ENCODE measurements at regions of chr16 and their contacts with region 1.

Region 1: GRCh38 chr16:30429678-30430427 is at the start of gene DCTPP1:
- DNase-seq: peak; percentile 89 to 100 (median 95)
- ATAC-seq: peak; percentile 96
- H3K4me3 ChIP-seq: peak within 1 kb of the TSS; percentile 62 to 71
- H3K4me3 Mint-ChIP-seq: no peak within 1 kb of the TSS
- H3K27ac ChIP-seq: peak within 1 kb of the TSS; percentile 60 to 72
- H3K27ac Mint-ChIP-seq: no peak within 1 kb of the TSS
- H3K4me1 ChIP-seq: peaks cover 18% of the 10 kb centered on the region
- H3K4me1 Mint-ChIP-seq: peaks cover 19% of the 10 kb centered on the region
- H3K27me3 ChIP-seq: no peaks in the 10 kb centered on the region
- H3K27me3 Mint-ChIP-seq: no peaks in the 10 kb centered on the region
- CTCF ChIP-seq: peak; percentile 63
- total RNA-seq, gene DCTPP1: 4.0 to 5.5 TPM

Region 2: DNA sequence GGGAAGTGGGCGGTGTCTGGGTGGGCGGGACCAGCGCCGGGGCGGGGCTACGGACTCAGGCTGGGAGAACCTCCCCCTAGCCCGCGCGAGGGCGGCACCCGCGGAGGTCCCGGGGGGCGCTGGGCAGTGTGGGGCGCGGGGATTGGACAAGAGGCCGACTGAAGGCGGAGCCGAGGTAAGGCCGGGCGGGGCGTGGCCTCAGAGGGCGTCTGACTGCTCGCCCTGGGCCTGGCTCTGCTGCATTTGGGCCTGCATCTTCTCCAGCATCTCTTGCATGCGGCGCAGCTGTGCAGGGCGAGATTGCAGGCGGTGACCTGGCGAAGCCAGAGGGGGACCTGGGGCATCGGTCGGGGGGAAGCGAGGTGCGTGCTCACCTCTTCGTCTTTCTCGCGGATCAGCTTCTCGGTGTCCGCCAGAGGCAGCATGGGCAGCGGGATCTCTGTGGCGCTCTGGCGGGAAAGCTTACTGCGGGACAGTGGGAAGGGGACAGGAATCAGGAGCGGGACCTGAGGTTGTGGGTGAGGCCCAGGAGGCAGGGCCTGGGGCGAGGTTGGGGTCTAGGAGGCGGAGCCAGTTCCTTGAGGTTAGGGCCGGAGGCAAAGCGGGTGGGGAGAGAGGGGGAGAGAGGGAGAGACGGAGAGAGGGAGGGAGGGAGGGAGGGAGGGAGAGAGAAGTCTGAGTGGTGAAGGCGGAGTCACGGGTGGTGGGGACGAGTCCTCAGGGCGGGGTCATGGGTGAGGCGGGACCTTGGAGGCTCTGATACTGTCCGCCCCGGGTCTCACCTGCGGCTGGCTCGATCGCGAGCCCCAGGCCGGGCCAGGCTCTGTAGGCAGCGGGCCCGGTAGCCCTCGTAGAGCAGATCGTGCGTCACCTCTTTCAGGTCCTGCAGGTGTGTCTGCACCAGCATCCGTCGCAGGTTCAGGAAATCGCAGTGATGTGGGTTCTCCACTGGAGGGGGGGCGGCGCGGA is 51.3 kb before region 1 on chr16:
- CTCF ChIA-PET with region 1: interaction called, 3 read pairs
- POLR2A ChIA-PET with region 1: interaction called, 14 read pairs
- intact Hi-C with region 1: no loop called
- DNase-seq: peak; percentile 99 to 100 (median 100)
- ATAC-seq: peak; percentile 78
- H3K4me3 ChIP-seq: peak overlapping the region; percentile 82 to 94
- H3K4me3 Mint-ChIP-seq: peak overlapping the region; percentile 98
- H3K27ac ChIP-seq: peak overlapping the region; percentile 99 to 100
- H3K27ac Mint-ChIP-seq: peak overlapping the region; percentile 100
- H3K4me1 ChIP-seq: peaks cover 58% of the 10 kb centered on the region
- H3K4me1 Mint-ChIP-seq: peaks cover 60% of the 10 kb centered on the region
- H3K27me3 ChIP-seq: no peaks in the 10 kb centered on the region
- H3K27me3 Mint-ChIP-seq: no peaks in the 10 kb centered on the region
- CTCF ChIP-seq: no peak

Region 3: DNA sequence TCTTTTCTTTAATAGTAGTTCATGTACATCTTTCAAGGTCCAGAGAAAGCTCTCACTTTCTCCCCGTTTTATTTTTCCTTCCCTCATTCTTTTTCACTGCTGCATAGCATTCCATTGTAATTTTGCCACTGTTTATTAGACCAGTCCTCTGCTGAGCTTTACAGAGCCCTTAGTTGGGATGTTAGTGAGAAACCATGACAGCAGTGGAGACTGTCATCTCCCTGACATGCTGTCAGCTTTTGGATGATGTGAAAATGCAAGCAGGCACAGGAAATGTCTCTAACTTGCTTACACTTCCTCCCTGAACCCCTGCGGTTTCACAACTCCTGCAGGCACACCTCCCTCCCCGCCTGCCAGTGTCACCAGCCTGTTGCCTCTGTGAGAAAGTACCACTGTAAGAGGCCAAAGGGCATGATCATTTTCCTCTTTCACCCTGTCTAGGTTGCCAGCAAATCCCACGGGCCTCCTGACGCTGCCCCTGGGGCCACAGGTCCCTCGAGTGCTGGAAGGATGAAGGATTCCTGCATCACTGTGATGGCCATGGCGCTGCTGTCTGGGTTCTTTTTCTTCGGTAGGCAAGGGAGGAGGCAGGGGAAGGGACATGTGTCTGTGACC is 42.6 kb after region 1 on chr16 and contains the start of gene ITGAL:
- CTCF ChIA-PET with region 1: interaction called, 18 read pairs
- POLR2A ChIA-PET with region 1: interaction called, 11 read pairs
- intact Hi-C with region 1: loop called (anchors 1 kb)
- DNase-seq: peak; percentile 67 to 96 (median 85)
- ATAC-seq: peak; percentile 81
- H3K4me3 ChIP-seq: peak within 1 kb of the TSS; percentile 70 to 89
- H3K4me3 Mint-ChIP-seq: peak within 1 kb of the TSS; percentile 95
- H3K27ac ChIP-seq: peak within 1 kb of the TSS; percentile 80 to 83
- H3K27ac Mint-ChIP-seq: peak within 1 kb of the TSS; percentile 93
- H3K4me1 ChIP-seq: peaks cover 71% of the 10 kb centered on the region
- H3K4me1 Mint-ChIP-seq: peaks cover 68% of the 10 kb centered on the region
- H3K27me3 ChIP-seq: no peaks in the 10 kb centered on the region
- H3K27me3 Mint-ChIP-seq: no peaks in the 10 kb centered on the region
- CTCF ChIP-seq: no peak
- total RNA-seq, gene ITGAL: 187 to 218 TPM

Region 4: GRCh38 chr16:30557957-30558788 is 128.3 kb after region 1 on chr16 and contains the start of gene ZNF764:
- CTCF ChIA-PET with region 1: interaction called, 14 read pairs
- POLR2A ChIA-PET with region 1: interaction called, 6 read pairs
- intact Hi-C with region 1: loop called in 1 of 2 experiments (anchors 1 kb)
- DNase-seq: peak; percentile 88 to 98 (median 96)
- ATAC-seq: peak; percentile 90
- H3K4me3 ChIP-seq: peak within 1 kb of the TSS; percentile 68 to 84
- H3K4me3 Mint-ChIP-seq: peak within 1 kb of the TSS; percentile 84
- H3K27ac ChIP-seq: peak within 1 kb of the TSS; percentile 80 to 88
- H3K27ac Mint-ChIP-seq: peak within 1 kb of the TSS; percentile 93
- H3K4me1 ChIP-seq: peaks cover 28% of the 10 kb centered on the region
- H3K4me1 Mint-ChIP-seq: peaks cover 35% of the 10 kb centered on the region
- H3K27me3 ChIP-seq: no peaks in the 10 kb centered on the region
- H3K27me3 Mint-ChIP-seq: no peaks in the 10 kb centered on the region
- CTCF ChIP-seq: no peak
- total RNA-seq, gene ZNF764: 15.0 to 15.6 TPM

Region 5: DNA sequence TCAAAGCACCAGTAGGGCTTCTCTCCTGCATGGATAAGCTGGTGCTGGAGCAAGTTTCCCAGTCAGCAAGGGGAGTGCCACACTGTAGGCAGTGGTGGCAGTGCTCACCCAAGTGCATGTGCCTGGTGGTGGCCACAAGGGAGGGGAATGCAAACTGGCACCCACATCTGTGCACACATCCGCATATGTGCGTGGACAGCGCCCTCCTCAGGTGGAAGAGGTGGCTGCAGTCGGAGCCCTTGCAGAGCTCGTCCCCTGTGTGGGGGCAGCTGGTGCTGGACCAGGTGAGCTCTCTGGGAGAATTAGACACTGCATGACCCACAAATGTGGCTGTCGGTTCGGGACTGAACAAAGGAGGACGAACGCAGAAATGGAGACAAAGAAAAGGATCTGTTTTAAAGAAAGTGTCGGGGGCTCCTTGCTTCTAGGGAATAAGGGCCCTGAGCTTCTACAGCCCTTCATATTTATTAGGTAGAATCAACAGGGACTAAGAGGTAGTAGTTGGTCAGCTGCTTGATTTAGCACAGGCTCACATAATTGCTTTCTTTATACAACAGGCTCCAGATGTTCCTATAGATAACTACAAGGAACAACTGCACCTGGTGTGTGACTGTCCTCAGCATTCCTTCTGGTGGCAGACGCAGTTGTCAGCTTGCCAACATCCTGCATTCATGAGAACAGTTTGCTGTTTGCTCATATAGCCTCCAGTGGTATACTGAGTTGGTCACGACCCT is 185.7 kb after region 1 on chr16:
- CTCF ChIA-PET with region 1: interaction called, 4 read pairs
- POLR2A ChIA-PET with region 1: interaction called, 7 read pairs
- intact Hi-C with region 1: loop called in 1 of 2 experiments (anchors 1 kb)
- DNase-seq: peak; percentile 36 to 78 (median 66)
- ATAC-seq: peak; percentile 90
- H3K4me3 ChIP-seq: no peak overlapping the region
- H3K4me3 Mint-ChIP-seq: no peak overlapping the region
- H3K27ac ChIP-seq: no peak overlapping the region
- H3K27ac Mint-ChIP-seq: no peak overlapping the region
- H3K4me1 ChIP-seq: no peaks in the 10 kb centered on the region
- H3K4me1 Mint-ChIP-seq: peaks cover 1% of the 10 kb centered on the region
- H3K27me3 ChIP-seq: peaks cover 0 to 2% of the 10 kb centered on the region in 2 experiments
- H3K27me3 Mint-ChIP-seq: no peaks in the 10 kb centered on the region
- CTCF ChIP-seq: peak; percentile 50

Measured in CD8-positive, alpha-beta T cell (primary cell).